ENCODE measurements at regions of chr6 and their contacts with region 1.

Region 1: DNA sequence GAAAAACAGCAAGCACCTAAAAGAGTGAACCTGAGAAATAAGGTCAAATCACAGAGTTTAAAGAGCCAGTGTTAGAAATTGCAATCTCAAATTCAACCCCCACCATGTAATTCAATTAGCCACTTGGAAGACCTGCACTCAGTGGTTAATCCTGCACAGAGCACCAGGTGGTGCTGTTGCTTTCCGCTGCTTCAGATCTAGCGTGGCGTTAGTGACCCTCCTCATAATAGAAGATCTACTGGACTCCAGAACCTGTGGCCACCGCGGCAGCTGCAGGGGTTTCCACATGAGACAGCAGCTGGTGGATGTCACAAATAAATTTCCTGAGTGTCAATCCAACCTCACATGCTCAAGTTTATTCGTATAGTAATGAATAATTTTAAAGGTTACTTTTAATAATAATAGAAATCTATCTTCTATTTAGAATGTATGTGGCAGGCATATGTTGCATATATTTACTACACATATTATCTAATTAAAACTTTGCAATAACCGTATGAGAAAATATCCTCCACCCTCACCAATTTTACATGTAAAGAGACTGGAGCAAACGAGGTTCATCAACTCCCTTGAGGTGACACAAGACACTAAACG is 84.4 kb downstream of the SYNE1 start:
- DNase-seq: peak; percentile 11
- H3K4me3 Mint-ChIP-seq: no peak overlapping the region
- H3K27ac Mint-ChIP-seq: no peak overlapping the region
- H3K4me1 Mint-ChIP-seq: no peaks in the 10 kb centered on the region
- H3K27me3 Mint-ChIP-seq: no peaks in the 10 kb centered on the region

Region 2: DNA sequence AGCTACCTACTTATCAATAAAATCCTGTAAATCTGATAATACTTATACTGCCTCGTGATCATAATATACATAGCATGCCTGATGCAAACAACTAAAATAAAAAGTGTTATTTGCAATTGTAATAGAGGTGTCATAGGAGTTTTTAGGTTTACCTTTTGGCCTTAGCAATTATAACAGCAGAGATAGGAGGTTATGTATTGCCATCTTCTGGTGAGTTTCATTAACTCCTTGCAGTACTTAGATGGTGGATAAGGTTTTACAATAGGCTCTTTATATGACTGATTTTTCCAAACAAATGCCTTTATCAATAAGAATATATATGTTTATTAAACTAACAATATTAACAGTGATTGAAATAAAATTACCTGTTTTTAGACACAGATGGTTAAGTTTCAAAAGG is 117.2 kb after region 1 on chr6:
- intact Hi-C with region 1: loop called (anchors 10 kb)
- DNase-seq: no peak
- H3K4me3 Mint-ChIP-seq: no peak overlapping the region
- H3K27ac Mint-ChIP-seq: no peak overlapping the region
- H3K4me1 Mint-ChIP-seq: no peaks in the 10 kb centered on the region
- H3K27me3 Mint-ChIP-seq: no peaks in the 10 kb centered on the region

Measured in activated T-helper 2 cell treated with anti-CD3 and anti-CD28 coated beads, Interferon-gamma antibody, Interleukin-2, Interleukin-4, amounts not matched to agents 10 μg/mL and 5 μg/mL and 100 μg/mL, durations not matched to agents 14 hours and 24 hours and 36 hours (primary cell).